ENCODE measurements at regions of chr9 and their contacts with region 1.

Region 1: GRCh38 chr9:114291064-114291474 is 31.8 kb upstream of the ORM1 start:
- DNase-seq: peak; percentile 81
- H3K4me3 ChIP-seq: peak overlapping the region in 1 of 2 experiments; percentile 42; a peak in 1 of 4 replicates
- H3K27ac ChIP-seq: no peak overlapping the region
- H3K4me1 ChIP-seq: peaks cover 12 to 17% of the 10 kb centered on the region in 2 experiments; a peak in 2 of 4 replicates
- H3K27me3 ChIP-seq: no peaks in the 10 kb centered on the region
- CTCF ChIP-seq: peak; percentile 88
- EP300 ChIP-seq: no peak
- RAD21 ChIP-seq: peak; percentile 92

Region 2: DNA sequence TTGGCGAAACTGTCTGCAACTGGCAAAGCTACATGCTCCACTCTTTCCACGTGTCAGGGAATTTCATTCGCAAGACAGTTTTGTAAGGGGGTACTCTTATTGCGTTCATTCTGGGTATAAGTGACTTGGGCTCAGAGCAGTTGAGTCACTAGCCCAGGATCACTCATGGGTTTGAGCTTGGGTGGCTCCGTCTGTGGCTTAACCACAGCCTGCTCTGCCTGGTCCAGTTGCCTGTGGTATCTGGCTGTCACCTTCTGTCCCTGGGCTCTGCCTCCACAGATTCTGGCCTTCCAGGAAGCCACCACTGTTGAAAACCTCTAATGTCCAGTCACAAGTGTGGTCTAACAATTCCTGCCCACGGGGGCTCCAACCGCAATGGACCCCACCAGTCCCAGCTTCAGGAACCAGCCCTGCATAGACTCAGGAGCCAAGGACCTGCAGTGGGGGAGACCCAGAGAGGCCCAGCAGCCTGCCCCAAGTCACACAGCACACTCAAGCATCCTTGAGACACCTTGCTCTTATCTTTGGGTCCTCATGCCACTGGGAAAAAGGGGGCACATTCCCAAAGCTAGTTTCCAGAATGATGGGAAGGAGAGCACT is 202.4 kb before region 1 on chr9:
- CTCF ChIA-PET with region 1: interaction called, 133 read pairs
- POLR2A ChIA-PET with region 1: no interaction called
- DNase-seq: no peak
- H3K4me3 ChIP-seq: no peak overlapping the region
- H3K27ac ChIP-seq: no peak overlapping the region
- H3K4me1 ChIP-seq: no peaks in the 10 kb centered on the region
- H3K27me3 ChIP-seq: no peaks in the 10 kb centered on the region; the same call in 1 of the 2 replicates
- CTCF ChIP-seq: no peak
- EP300 ChIP-seq: no peak
- RAD21 ChIP-seq: no peak

Region 3: GRCh38 chr9:114117996-114118830 is 172.9 kb before region 1 on chr9:
- CTCF ChIA-PET with region 1: interaction called, 25 read pairs
- POLR2A ChIA-PET with region 1: no interaction called
- DNase-seq: no peak
- H3K4me3 ChIP-seq: no peak overlapping the region
- H3K27ac ChIP-seq: no peak overlapping the region
- H3K4me1 ChIP-seq: no peaks in the 10 kb centered on the region; a peak in 1 of 4 replicates
- H3K27me3 ChIP-seq: peaks cover 5% of the 10 kb centered on the region; the same call in 1 of the 2 replicates
- CTCF ChIP-seq: no peak
- EP300 ChIP-seq: no peak
- RAD21 ChIP-seq: no peak

Region 4: GRCh38 chr9:114155263-114155972 is 135.7 kb before region 1 on chr9 and contains the start of gene COL27A1:
- CTCF ChIA-PET with region 1: interaction called, 187 read pairs
- POLR2A ChIA-PET with region 1: no interaction called
- DNase-seq: peak; percentile 97
- H3K4me3 ChIP-seq: peak within 1 kb of the TSS; percentile 54 to 88
- H3K27ac ChIP-seq: peak within 1 kb of the TSS in 1 of 2 experiments; percentile 29; a peak in 1 of 4 replicates
- H3K4me1 ChIP-seq: peaks cover 5 to 8% of the 10 kb centered on the region in 2 experiments; a peak in 2 of 4 replicates
- H3K27me3 ChIP-seq: peaks cover 5% of the 10 kb centered on the region; the same call in 1 of the 2 replicates
- CTCF ChIP-seq: peak; percentile 93
- EP300 ChIP-seq: no peak
- RAD21 ChIP-seq: peak; percentile 82
- polyA plus RNA-seq, gene COL27A1: 6.8 and 8.7 TPM in 2 replicates

Region 5: DNA sequence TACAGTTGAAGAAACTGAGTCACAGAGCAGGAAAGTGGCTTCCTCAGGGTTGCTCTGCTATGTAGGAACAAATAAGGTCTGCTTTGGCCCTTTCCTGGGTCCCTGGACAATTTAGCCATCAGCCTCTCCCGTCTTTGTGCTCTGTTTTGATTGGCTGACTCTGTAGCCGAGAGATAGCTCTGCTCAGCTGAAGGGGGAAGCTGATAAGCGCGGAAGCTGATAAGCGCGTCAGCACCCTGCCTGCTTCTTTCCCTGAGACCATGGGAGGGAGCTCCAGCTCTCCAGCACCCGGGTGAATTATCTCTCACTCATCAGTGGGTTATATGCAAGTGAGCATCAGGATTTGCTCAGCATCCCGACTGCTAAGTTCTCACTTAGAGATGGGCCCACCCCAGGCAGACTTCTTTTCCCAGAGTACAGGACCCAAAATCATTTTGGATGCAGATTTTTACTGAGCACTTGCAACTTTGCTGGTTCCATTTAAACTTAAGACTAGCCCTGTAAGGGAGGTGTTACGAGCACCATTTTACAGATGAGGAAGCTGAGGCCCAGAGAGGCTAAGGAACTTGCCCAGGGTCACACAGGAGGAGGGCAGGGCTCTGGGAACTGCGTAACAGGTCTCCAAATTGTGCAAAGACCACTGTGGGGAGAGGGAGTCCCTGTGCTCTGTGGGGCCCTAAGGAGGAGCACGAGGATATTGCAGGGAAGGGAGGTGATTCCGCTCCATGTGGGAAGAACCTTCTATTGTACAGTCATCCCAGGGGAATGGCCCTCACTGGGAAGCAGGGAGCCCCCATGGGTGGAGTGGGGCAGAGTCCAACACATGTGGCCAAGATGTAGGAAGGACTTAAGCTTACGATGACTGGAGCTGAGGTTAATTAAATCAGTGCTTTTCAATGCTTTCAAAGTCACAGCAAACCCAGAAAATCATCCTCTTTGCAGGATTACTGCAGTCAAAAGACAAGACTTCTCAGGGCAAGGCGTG is 51.9 kb before region 1 on chr9:
- CTCF ChIA-PET with region 1: interaction called, 137 read pairs
- POLR2A ChIA-PET with region 1: no interaction called
- DNase-seq: peak; percentile 94
- H3K4me3 ChIP-seq: no peak overlapping the region
- H3K27ac ChIP-seq: no peak overlapping the region; a peak in 1 of 4 replicates
- H3K4me1 ChIP-seq: peaks cover 0 to 42% of the 10 kb centered on the region in 2 experiments; a peak in 2 of 4 replicates
- H3K27me3 ChIP-seq: no peaks in the 10 kb centered on the region
- CTCF ChIP-seq: peak; percentile 46
- EP300 ChIP-seq: 0 out of 4 replicates have a peak, but pooled peaks of 1 of the 2 experiments have one; percentile 21
- RAD21 ChIP-seq: peak; percentile 87

Region 6: DNA sequence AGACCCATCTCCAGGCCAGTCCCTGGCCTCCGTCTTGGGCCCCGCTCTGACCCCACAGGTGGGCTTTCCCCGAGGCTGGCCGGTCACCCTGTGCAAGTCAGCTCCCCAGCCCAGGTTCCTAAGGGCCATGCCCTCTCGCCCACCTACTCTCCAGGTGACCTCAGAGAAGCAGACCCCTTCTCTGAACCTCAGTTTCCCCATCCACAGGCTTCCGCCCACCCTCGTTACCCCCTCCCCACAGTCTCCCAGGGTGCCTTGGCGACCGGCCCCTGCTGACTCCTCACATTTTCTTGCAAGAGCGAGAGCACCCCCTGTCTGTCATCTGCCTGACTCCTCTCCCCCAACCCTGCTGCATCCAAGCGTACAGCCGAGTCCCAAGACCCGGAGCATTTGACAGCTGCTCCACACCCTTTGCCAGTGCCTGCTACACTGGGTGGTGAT is 19.4 kb before region 1 on chr9:
- CTCF ChIA-PET with region 1: interaction called, 85 read pairs
- POLR2A ChIA-PET with region 1: no interaction called
- DNase-seq: peak; percentile 78
- H3K4me3 ChIP-seq: no peak overlapping the region
- H3K27ac ChIP-seq: no peak overlapping the region
- H3K4me1 ChIP-seq: peaks cover 0 to 2% of the 10 kb centered on the region in 2 experiments; a peak in 1 of 4 replicates
- H3K27me3 ChIP-seq: no peaks in the 10 kb centered on the region
- CTCF ChIP-seq: peak; percentile 55
- EP300 ChIP-seq: no peak
- RAD21 ChIP-seq: peak; percentile 80